ENCODE measurements at regions of chrX and their contacts with region 1.

Region 1: DNA sequence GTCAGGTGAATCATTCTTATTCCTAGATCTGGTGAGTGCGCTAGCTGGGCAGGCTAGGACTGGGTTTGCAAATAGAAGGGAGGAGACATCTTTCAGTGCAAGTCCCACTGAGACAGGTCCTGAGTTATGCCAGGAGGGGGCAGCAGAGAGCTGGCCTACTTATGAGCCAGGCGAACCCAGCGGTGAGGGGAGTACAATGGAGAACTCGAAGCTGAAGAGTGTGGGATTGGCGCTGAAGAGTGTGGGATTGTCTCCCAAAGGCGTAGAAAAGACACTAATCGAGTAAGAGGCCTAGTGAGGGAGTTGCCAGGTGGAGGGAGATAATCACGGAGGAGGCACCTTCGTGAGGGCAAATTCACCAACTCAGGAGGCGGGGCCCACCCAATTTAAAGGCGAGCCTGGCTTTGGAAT is 91.7 kb upstream of the CXorf66 start:
- DNase-seq: peak; percentile 50 to 60
- ATAC-seq: peak; percentile 42 to 77 (median 68)
- H3K4me3 ChIP-seq: no peak overlapping the region
- H3K27ac ChIP-seq: no peak overlapping the region
- H3K4me1 ChIP-seq: no peaks in the 10 kb centered on the region
- H3K27me3 ChIP-seq: peaks cover 0 to 21% (median 0%) of the 10 kb centered on the region in 7 donors
- CTCF ChIP-seq: peak; percentile 48 to 87 (median 71)

Region 2: GRCh38 chrX:140141444-140142029 is 84.5 kb after region 1 on chrX:
- intact Hi-C with region 1: loop called in 6 of 10 experiments (anchors 5 to 10 kb)
- DNase-seq: no peak
- ATAC-seq: no peak
- H3K4me3 ChIP-seq: no peak overlapping the region
- H3K27ac ChIP-seq: no peak overlapping the region
- H3K4me1 ChIP-seq: no peaks in the 10 kb centered on the region
- H3K27me3 ChIP-seq: peaks cover 0 to 17% (median 0%) of the 10 kb centered on the region in 7 donors
- CTCF ChIP-seq: peak; percentile 7 to 73 (median 57)

Region 3: DNA sequence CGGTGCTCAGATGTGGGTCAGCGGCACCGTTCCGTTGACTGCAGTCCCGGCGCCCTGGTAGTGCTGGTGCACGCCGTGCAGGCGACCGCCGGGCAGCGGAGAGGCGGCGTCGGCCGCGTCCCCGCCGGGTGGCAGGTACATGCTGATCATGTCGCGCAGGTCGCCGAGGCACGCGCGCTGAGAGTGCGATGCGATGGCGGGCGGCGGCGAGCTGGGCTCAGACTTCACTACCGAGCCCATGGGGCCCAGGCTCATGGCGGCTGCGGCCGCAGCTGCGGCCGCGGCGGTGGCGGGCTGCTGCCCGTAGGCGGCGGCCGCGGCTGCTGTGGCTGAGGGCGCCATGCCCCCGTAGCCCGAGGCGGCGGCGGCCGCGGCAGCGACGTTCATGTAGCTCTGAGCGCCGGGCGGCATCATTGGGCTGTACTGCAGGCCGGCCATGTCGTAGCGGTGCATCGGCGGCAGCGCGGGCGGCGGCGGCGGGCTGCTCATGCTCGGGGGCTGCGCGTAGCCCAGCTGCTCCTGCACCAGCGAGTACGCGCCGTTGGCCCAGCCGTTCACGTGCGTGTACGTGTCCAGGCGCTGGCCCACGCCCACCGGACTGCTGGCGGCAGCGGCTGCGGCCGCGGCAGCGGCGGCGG is 446.8 kb after region 1 on chrX:
- intact Hi-C with region 1: loop called in 1 of 10 experiments (anchors 10 kb)
- DNase-seq: peak in 1 of 2 donors; percentile 18
- ATAC-seq: peak in 3 of 8 donors; percentile 46 to 75 (median 66)
- H3K4me3 ChIP-seq: peak overlapping the region in 9 of 10 donors; percentile 7 to 36 (median 25)
- H3K27ac ChIP-seq: no peak overlapping the region
- H3K4me1 ChIP-seq: peaks cover 0 to 28% (median 0%) of the 10 kb centered on the region in 9 donors
- H3K27me3 ChIP-seq: peaks cover 11 to 100% (median 83%) of the 10 kb centered on the region in 7 donors
- CTCF ChIP-seq: peak in 1 of 9 donors; percentile 13

Region 4: DNA sequence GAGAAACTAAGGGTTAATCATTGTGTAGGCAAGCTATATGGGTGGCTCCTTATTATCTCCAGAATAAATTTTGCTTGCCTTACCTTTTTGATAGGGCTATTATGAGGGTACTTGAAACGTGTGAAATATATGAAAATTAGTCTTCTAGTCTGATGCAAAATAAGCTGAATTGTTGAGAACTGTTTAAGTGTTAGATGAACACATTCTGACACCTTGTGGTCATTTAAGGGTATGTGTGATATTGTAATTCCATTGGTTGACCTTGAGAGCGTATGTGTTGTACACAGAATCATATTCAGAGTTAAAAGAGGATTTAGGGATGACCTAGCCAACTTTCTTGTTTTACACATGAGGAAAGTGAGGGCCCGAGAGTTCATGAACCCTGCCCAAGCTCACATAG is 607.9 kb after region 1 on chrX:
- intact Hi-C with region 1: loop called in 7 of 10 experiments (anchors 5 to 10 kb)
- DNase-seq: no peak
- ATAC-seq: peak in 1 of 8 donors; percentile 33
- H3K4me3 ChIP-seq: no peak overlapping the region
- H3K27ac ChIP-seq: no peak overlapping the region
- H3K4me1 ChIP-seq: no peaks in the 10 kb centered on the region
- H3K27me3 ChIP-seq: peaks cover 0 to 13% (median 0%) of the 10 kb centered on the region in 7 donors
- CTCF ChIP-seq: peak in 8 of 9 donors; percentile 10 to 40 (median 29)

Region 5: DNA sequence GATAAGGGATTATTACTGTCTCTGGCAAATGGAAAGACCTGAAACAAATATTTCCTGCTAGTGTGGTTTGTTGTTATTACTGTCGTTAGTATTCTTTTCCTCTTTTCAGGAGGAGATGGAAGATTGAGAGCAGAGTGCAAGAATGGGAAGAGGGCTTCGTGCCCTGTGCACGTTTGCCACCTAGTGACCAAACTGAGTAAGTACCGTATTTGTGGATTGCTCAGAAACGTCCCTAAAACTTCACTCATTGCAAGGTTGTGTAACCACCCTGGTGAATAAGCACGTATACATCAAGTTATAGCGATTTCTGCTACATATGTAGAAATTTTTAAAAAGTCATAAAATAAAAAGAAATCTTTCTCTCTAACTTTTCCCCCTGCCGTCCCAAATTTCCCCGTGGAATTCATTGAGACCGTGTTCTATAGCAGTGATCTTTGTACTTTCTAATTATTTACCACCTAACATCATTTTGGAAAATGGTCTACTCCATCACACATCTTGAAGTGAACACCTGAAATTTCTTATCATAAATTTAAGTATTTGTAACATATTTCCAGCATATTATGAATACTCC is 676.9 kb after region 1 on chrX:
- intact Hi-C with region 1: loop called in 1 of 10 experiments (anchors 10 kb)
- DNase-seq: no peak
- ATAC-seq: peak in 2 of 8 donors; percentile 47 to 73
- H3K4me3 ChIP-seq: no peak overlapping the region
- H3K27ac ChIP-seq: no peak overlapping the region
- H3K4me1 ChIP-seq: no peaks in the 10 kb centered on the region
- H3K27me3 ChIP-seq: peaks cover 0 to 10% (median 0%) of the 10 kb centered on the region in 7 donors
- CTCF ChIP-seq: peak; percentile 41 to 83 (median 65)

Measured in heart right ventricle (tissue), 16 donors.